SK-N-SH (cell line): ENCODE measurements at regions of chr10 and their contacts with region 1.

Region 1: GRCh38 chr10:102352066-102352715 is 43.3 kb upstream of the NFKB2 start:
- DNase-seq: peak; percentile 78
- H3K4me3 ChIP-seq: no peak overlapping the region; a peak in 1 of 4 replicates
- H3K27ac ChIP-seq: no peak overlapping the region
- H3K4me1 ChIP-seq: no peaks in the 10 kb centered on the region
- H3K27me3 ChIP-seq: no peaks in the 10 kb centered on the region
- CTCF ChIP-seq: peak; percentile 96
- EP300 ChIP-seq: no peak
- RAD21 ChIP-seq: peak; percentile 83

Region 2: DNA sequence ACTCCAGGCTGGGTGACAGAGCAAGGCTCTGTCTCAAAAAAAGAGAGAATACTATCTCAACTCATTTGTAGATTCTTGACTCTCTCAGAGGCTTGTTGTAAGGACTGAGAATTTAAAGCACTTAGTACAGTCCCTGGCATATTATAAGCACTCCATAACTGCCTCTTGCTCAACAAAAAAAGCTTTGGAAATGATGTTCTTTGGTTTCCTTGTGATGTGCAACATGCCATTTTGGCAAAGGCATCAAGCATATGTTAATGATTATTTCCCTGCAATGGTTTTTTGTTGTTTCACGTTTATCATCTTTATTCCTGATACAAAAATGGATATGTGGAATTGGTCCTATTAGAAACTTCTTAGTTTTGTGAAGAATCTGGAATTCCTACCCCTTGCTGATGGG is 184.3 kb before region 1 on chr10:
- CTCF ChIA-PET with region 1: interaction called, 205 read pairs
- POLR2A ChIA-PET with region 1: no interaction called
- DNase-seq: no peak
- H3K4me3 ChIP-seq: no peak overlapping the region
- H3K27ac ChIP-seq: no peak overlapping the region
- H3K4me1 ChIP-seq: no peaks in the 10 kb centered on the region
- H3K27me3 ChIP-seq: no peaks in the 10 kb centered on the region
- CTCF ChIP-seq: no peak
- EP300 ChIP-seq: no peak
- RAD21 ChIP-seq: no peak

Region 3: GRCh38 chr10:102245101-102245931 is 106.9 kb before region 1 on chr10 and contains the start of gene GBF1:
- CTCF ChIA-PET with region 1: interaction called, 824 read pairs
- POLR2A ChIA-PET with region 1: no interaction called
- DNase-seq: peak; percentile 94
- H3K4me3 ChIP-seq: peak within 1 kb of the TSS; percentile 86 to 94
- H3K27ac ChIP-seq: peak within 1 kb of the TSS; percentile 73 to 87; a peak in 3 of 4 replicates
- H3K4me1 ChIP-seq: peaks cover 12 to 34% of the 10 kb centered on the region in 2 experiments; a peak in 2 of 4 replicates
- H3K27me3 ChIP-seq: peaks cover 2% of the 10 kb centered on the region; the same call in 1 of the 2 replicates
- CTCF ChIP-seq: no peak
- EP300 ChIP-seq: peak in 1 of 2 experiments; percentile 73; a peak in 1 of 4 replicates
- RAD21 ChIP-seq: no peak
- polyA plus RNA-seq, gene GBF1: 11.4 and 12.3 TPM in 2 replicates

Region 4: GRCh38 chr10:102327002-102327401 is 25.2 kb before region 1 on chr10:
- CTCF ChIA-PET with region 1: interaction called, 12 read pairs
- POLR2A ChIA-PET with region 1: no interaction called
- DNase-seq: no peak
- H3K4me3 ChIP-seq: no peak overlapping the region
- H3K27ac ChIP-seq: no peak overlapping the region
- H3K4me1 ChIP-seq: no peaks in the 10 kb centered on the region; a peak in 1 of 4 replicates
- H3K27me3 ChIP-seq: no peaks in the 10 kb centered on the region
- CTCF ChIP-seq: no peak
- EP300 ChIP-seq: no peak
- RAD21 ChIP-seq: no peak

Region 5: DNA sequence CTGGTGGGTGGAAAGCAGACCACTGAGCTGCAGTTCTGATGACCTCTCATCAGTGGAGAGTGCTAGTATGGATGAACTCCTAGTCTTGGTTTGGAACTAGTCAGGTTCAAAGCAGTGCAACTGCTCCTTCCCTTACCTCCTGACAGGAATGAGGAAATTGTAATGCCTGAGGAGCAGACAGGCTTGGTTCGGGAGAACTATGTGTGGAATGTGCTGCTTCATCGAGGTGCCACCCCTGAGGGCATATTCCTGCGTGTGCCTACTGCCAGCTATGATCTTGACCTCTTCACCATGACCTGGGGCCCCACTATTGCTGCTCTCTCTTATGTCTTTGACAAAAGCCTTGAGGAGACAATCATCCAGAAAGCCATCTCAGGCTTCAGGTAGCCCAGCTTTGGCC is 15.9 kb after region 1 on chr10:
- CTCF ChIA-PET with region 1: interaction called, 67 read pairs
- POLR2A ChIA-PET with region 1: no interaction called
- DNase-seq: no peak
- H3K4me3 ChIP-seq: no peak overlapping the region
- H3K27ac ChIP-seq: no peak overlapping the region
- H3K4me1 ChIP-seq: no peaks in the 10 kb centered on the region
- H3K27me3 ChIP-seq: no peaks in the 10 kb centered on the region
- CTCF ChIP-seq: no peak
- EP300 ChIP-seq: no peak
- RAD21 ChIP-seq: no peak

Region 6: GRCh38 chr10:102384053-102384452 is 31.9 kb after region 1 on chr10:
- CTCF ChIA-PET with region 1: interaction called, 12 read pairs
- POLR2A ChIA-PET with region 1: no interaction called
- DNase-seq: no peak
- H3K4me3 ChIP-seq: no peak overlapping the region
- H3K27ac ChIP-seq: no peak overlapping the region
- H3K4me1 ChIP-seq: no peaks in the 10 kb centered on the region; a peak in 1 of 4 replicates
- H3K27me3 ChIP-seq: no peaks in the 10 kb centered on the region
- CTCF ChIP-seq: peak; percentile 18; the same call in 1 of the 2 replicates
- EP300 ChIP-seq: no peak
- RAD21 ChIP-seq: no peak

Region 7: DNA sequence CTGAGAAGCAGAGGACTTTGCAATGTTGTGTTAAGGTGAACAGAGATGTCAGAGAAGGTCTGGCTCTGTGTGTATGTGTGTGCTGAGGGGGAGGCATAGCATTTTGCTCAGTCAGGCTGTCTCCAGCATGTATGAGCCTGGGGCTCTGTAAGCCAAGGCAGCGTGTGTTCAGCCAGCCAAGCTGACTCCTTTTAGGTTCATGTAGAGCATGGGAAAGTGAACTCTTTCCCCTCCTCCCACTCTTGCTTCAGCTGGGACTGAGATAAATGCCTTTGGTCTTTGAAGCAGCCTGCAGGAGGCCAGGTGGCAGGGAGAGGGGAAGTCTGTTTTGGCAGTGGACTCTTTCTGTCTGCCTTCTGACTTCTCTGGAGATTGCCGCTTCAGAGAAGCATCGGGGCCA is 366.0 kb after region 1 on chr10:
- CTCF ChIA-PET with region 1: no interaction called
- POLR2A ChIA-PET with region 1: no interaction called
- DNase-seq: no peak
- H3K4me3 ChIP-seq: no peak overlapping the region
- H3K27ac ChIP-seq: no peak overlapping the region
- H3K4me1 ChIP-seq: peaks cover 0 to 14% of the 10 kb centered on the region in 2 experiments; a peak in 3 of 4 replicates
- H3K27me3 ChIP-seq: no peaks in the 10 kb centered on the region
- CTCF ChIP-seq: no peak
- EP300 ChIP-seq: no peak
- RAD21 ChIP-seq: no peak